ENCODE measurements at regions of chr2 and their contacts with region 1.

Region 1: GRCh38 chr2:10122386-10123280 is at the start of gene RRM2:
- DNase-seq: peak; percentile 98
- H3K4me3 Mint-ChIP-seq: peak within 1 kb of the TSS; percentile 99
- H3K27ac Mint-ChIP-seq: peak within 1 kb of the TSS; percentile 99
- H3K4me1 Mint-ChIP-seq: peaks cover 27% of the 10 kb centered on the region
- H3K27me3 Mint-ChIP-seq: no peaks in the 10 kb centered on the region
- total RNA-seq, gene RRM2: 466 to 514 TPM

Region 2: GRCh38 chr2:9601397-9601796 is 521.2 kb before region 1 on chr2:
- CTCF ChIA-PET with region 1: no interaction called
- intact Hi-C with region 1: loop called (anchors 10 kb)
- DNase-seq: no peak
- H3K4me3 Mint-ChIP-seq: no peak overlapping the region
- H3K27ac Mint-ChIP-seq: no peak overlapping the region
- H3K4me1 Mint-ChIP-seq: peaks cover 47% of the 10 kb centered on the region
- H3K27me3 Mint-ChIP-seq: no peaks in the 10 kb centered on the region

Region 3: DNA sequence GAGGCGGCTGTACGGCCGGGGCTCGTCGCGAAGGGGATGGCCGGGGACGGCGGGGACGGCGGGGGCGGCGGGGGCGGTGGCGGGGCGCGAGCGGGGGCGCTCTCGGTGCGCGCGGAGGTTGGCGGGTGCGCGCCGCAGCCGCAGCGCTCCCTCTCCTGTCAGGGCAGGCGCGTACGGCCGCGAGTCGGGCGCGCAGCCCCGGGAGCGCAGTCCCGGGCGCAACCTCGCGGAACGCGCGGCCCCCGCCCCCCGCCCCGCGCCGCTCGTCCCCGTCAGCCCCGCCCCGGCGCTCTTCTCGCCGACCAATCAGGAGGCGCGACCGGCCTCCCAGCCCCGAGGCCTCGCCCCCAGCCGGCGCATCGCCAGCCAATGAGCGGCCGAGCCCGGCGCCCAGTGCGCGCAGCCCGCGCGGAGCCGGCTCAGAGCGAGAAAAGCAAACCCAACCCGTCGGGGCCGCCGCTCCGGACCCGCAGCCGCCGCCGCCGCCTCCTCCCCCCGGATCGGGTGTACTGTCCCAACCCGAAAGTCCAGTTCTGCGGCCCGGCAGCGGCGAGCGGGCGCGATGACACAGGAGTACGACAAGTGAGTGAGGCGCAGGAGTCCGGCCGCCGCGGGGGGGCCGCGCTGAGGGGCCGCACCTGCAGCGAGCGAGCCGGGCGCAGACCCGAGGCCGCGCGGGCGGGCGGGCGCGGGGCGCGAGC is 171.2 kb before region 1 on chr2 and contains the start of gene GRHL1:
- CTCF ChIA-PET with region 1: no interaction called
- intact Hi-C with region 1: loop called (anchors 1 kb)
- DNase-seq: peak; percentile 88
- H3K4me3 Mint-ChIP-seq: peak within 1 kb of the TSS; percentile 75
- H3K27ac Mint-ChIP-seq: no peak within 1 kb of the TSS
- H3K4me1 Mint-ChIP-seq: peaks cover 2% of the 10 kb centered on the region
- H3K27me3 Mint-ChIP-seq: peaks cover 32% of the 10 kb centered on the region
- total RNA-seq, gene GRHL1: 0.69 to 0.79 TPM

Region 4: GRCh38 chr2:9972621-9973479 is 149.8 kb before region 1 on chr2:
- CTCF ChIA-PET with region 1: no interaction called
- intact Hi-C with region 1: no loop called
- DNase-seq: no peak
- H3K4me3 Mint-ChIP-seq: no peak overlapping the region
- H3K27ac Mint-ChIP-seq: no peak overlapping the region
- H3K4me1 Mint-ChIP-seq: peaks cover 25% of the 10 kb centered on the region
- H3K27me3 Mint-ChIP-seq: no peaks in the 10 kb centered on the region

Region 5: GRCh38 chr2:10072656-10073480 is 49.8 kb before region 1 on chr2:
- CTCF ChIA-PET with region 1: interaction called, 33 read pairs
- intact Hi-C with region 1: loop called (anchors 1 kb)
- DNase-seq: peak; percentile 88
- H3K4me3 Mint-ChIP-seq: no peak overlapping the region
- H3K27ac Mint-ChIP-seq: no peak overlapping the region
- H3K4me1 Mint-ChIP-seq: peaks cover 1% of the 10 kb centered on the region
- H3K27me3 Mint-ChIP-seq: peaks cover 45% of the 10 kb centered on the region

Region 6: GRCh38 chr2:10331027-10331701 is 208.5 kb after region 1 on chr2:
- CTCF ChIA-PET with region 1: no interaction called
- intact Hi-C with region 1: loop called (anchors 1 kb)
- DNase-seq: peak; percentile 92
- H3K4me3 Mint-ChIP-seq: peak overlapping the region; percentile 86
- H3K27ac Mint-ChIP-seq: peak overlapping the region; percentile 91
- H3K4me1 Mint-ChIP-seq: peaks cover 77% of the 10 kb centered on the region
- H3K27me3 Mint-ChIP-seq: no peaks in the 10 kb centered on the region

Region 7: DNA sequence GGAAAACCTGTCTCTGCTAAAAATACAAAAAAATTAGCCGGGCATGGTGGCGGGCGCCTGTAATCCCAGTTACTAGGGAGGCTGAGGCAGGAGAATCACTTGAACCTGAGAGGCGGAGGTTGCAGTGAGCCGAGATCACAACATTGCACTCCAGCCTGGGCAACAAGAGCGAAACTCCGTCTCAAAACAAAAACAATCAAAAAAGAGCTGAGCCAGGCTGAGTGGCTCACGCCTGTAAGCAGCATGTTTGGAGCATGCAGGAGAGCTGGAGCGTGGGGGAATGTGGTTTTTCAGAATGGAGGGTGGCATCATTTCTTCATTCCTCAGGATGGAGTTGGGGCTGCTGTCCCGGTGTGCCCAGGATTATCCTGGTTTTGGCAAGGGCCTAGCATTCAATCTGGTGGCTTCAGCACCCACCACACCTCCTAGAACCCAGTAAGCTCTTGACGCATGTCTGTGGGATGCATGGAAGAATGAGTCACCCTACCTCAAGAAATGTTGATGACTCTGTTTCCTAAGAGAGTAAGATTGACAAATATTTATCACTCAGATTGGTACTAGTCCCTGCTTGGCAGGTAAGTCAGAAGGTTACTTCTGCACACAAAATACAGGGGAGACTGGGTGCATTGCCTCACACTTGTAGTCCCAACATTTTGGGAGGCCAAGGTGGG is 415.7 kb after region 1 on chr2:
- CTCF ChIA-PET with region 1: no interaction called
- intact Hi-C with region 1: no loop called
- DNase-seq: no peak
- H3K4me3 Mint-ChIP-seq: no peak overlapping the region
- H3K27ac Mint-ChIP-seq: no peak overlapping the region
- H3K4me1 Mint-ChIP-seq: peaks cover 3% of the 10 kb centered on the region
- H3K27me3 Mint-ChIP-seq: peaks cover 5% of the 10 kb centered on the region

Region 8: DNA sequence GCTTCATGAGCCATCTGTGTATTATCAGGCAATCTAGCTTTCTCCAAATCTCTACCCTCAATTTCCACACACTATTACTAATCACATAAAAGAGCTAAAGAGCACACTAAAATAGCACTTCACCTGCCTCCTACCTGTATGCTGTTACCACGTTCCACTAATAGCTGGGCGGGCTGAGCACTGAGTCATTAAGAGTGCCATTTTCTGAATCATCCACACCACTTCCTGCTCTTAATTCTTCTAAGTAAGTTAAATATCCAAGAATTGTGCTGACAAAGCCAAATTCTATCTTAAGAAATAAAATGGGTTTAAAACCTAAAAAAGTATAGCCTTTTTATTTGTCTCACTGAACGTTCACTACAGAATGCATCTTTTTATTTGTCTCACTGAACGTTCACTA is 531.4 kb after region 1 on chr2:
- CTCF ChIA-PET with region 1: no interaction called
- intact Hi-C with region 1: loop called (anchors 1 kb)
- DNase-seq: peak; percentile 87
- H3K4me3 Mint-ChIP-seq: peak overlapping the region; percentile 29
- H3K27ac Mint-ChIP-seq: peak overlapping the region; percentile 92
- H3K4me1 Mint-ChIP-seq: peaks cover 46% of the 10 kb centered on the region
- H3K27me3 Mint-ChIP-seq: no peaks in the 10 kb centered on the region

Region 9: GRCh38 chr2:11743846-11744553 is 1621.4 kb after region 1 on chr2:
- CTCF ChIA-PET with region 1: no interaction called
- intact Hi-C with region 1: loop called (anchors 5 kb)
- DNase-seq: peak; percentile 92
- H3K4me3 Mint-ChIP-seq: no peak overlapping the region
- H3K27ac Mint-ChIP-seq: peak overlapping the region; percentile 69
- H3K4me1 Mint-ChIP-seq: peaks cover 47% of the 10 kb centered on the region
- H3K27me3 Mint-ChIP-seq: no peaks in the 10 kb centered on the region

Measured in activated naive CD4-positive, alpha-beta T cell treated with anti-CD3 and anti-CD28 coated beads for 36 hours (primary cell).